ENCODE measurements at regions of chr4 and their contacts with region 1.

Region 1: DNA sequence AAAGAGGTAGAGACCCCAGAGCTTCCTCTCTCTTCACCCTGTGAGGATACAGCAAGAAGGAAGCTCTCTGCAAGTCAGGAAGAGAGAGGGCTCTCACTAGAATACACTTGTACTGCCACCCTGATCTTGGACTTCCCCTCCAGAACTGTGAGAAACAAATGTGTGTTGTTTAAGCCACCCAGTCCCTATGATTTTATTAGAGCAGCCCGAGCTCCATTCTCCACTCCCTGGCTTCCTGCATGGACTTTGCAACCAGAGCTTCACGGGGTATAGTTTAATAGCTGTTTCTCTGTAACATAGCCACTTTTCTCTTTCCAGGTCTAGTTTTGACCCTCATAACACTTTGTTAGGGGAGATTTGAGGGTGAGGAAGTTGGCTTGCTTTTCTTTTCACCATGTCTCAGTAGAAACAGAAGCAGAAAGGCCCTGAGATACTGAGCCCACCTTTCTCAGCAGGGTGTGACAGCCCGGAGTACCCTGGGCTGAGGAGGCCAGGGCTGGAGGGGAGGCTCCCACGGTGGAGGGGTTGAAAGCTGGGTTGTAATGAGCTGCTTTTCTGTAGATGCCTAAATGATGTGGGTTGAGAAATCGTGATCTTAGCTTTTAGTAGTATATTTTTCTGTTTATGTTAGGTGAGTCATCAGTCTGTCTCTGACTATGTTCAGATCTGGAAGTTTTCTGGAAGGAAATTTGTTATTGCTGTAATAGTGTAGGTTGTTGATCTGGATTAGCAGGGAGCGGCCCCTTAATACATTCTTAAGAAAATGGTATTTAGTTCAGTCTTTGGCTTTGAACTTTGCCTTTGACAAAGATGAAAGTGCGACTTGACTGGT is 118.6 kb downstream of the PTTG2 start:
- DNase-seq: peak; percentile 18
- ATAC-seq: peak; percentile 68
- H3K4me3 Mint-ChIP-seq: no peak overlapping the region
- H3K27ac Mint-ChIP-seq: peak overlapping the region; percentile 20
- H3K4me1 Mint-ChIP-seq: peaks cover 34% of the 10 kb centered on the region
- H3K27me3 Mint-ChIP-seq: no peaks in the 10 kb centered on the region

Region 2: GRCh38 chr4:37928426-37929416 is 150.1 kb before region 1 on chr4:
- CTCF ChIA-PET with region 1: no interaction called
- POLR2A ChIA-PET with region 1: no interaction called
- intact Hi-C with region 1: no loop called
- DNase-seq: no peak
- ATAC-seq: peak; percentile 64
- H3K4me3 Mint-ChIP-seq: no peak overlapping the region
- H3K27ac Mint-ChIP-seq: no peak overlapping the region
- H3K4me1 Mint-ChIP-seq: peaks cover 28% of the 10 kb centered on the region
- H3K27me3 Mint-ChIP-seq: no peaks in the 10 kb centered on the region

Region 3: GRCh38 chr4:37981844-37982720 is 96.7 kb before region 1 on chr4:
- CTCF ChIA-PET with region 1: no interaction called
- POLR2A ChIA-PET with region 1: no interaction called
- intact Hi-C with region 1: no loop called
- DNase-seq: no peak
- ATAC-seq: no peak
- H3K4me3 Mint-ChIP-seq: no peak overlapping the region
- H3K27ac Mint-ChIP-seq: no peak overlapping the region
- H3K4me1 Mint-ChIP-seq: peaks cover 37% of the 10 kb centered on the region
- H3K27me3 Mint-ChIP-seq: no peaks in the 10 kb centered on the region

Region 4: DNA sequence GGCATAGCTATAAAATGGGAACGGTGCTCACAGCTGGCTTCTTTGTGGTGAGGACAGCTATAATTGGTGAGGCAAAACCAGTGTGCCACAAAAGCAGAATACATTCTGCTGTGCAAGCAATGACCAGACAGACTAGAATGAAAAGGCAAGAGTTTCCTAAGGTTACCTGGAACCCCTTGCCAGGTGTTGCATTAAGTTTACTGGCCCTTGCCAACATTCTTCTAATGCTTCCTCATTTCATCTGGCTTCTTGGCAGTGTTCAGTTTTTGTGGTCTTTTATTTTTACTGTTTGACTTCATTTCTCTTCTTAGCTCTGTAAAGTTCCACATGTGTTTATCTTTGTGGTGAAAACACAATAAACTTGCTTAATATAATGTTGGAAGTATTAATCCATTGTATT is 12.8 kb after region 1 on chr4:
- CTCF ChIA-PET with region 1: interaction called, 10 read pairs
- POLR2A ChIA-PET with region 1: interaction called, 6 read pairs
- intact Hi-C with region 1: no loop called
- DNase-seq: no peak
- ATAC-seq: no peak
- H3K4me3 Mint-ChIP-seq: no peak overlapping the region
- H3K27ac Mint-ChIP-seq: peak overlapping the region; percentile 89
- H3K4me1 Mint-ChIP-seq: peaks cover 34% of the 10 kb centered on the region
- H3K27me3 Mint-ChIP-seq: no peaks in the 10 kb centered on the region

Region 5: DNA sequence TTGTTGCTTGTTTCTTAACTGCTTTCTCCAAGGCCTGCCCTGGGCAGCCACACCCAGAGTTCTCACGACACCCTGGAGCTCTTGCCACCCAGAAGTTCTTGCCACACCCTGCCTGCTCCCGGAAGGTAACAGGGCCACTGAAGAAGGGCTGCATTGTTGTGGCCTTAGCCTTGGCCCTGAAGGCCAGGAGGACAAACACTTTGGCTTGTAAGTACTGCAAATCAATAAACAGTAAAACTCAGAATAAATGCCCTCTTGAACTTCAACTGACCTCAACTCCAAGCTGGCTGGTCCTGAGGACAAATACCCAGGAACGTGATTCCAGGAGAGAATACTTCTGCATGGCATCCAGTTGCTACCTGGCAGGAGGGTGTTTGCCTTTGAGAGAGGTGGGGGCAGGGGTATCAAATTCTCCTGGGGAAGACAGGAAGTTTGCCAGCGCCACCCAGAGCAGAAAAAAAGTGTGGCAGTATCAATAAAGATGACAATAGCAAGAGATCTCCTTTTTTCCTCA is 649.9 kb after region 1 on chr4:
- CTCF ChIA-PET with region 1: no interaction called
- POLR2A ChIA-PET with region 1: no interaction called
- intact Hi-C with region 1: no loop called
- DNase-seq: peak; percentile 18
- ATAC-seq: no peak
- H3K4me3 Mint-ChIP-seq: no peak overlapping the region
- H3K27ac Mint-ChIP-seq: no peak overlapping the region
- H3K4me1 Mint-ChIP-seq: peaks cover 19% of the 10 kb centered on the region
- H3K27me3 Mint-ChIP-seq: no peaks in the 10 kb centered on the region

Region 6: GRCh38 chr4:38788327-38788726 is 709.5 kb after region 1 on chr4:
- CTCF ChIA-PET with region 1: no interaction called
- POLR2A ChIA-PET with region 1: no interaction called
- intact Hi-C with region 1: no loop called
- DNase-seq: no peak
- ATAC-seq: no peak
- H3K4me3 Mint-ChIP-seq: no peak overlapping the region
- H3K27ac Mint-ChIP-seq: no peak overlapping the region
- H3K4me1 Mint-ChIP-seq: no peaks in the 10 kb centered on the region
- H3K27me3 Mint-ChIP-seq: no peaks in the 10 kb centered on the region